HEK293 (cell line): ENCODE measurements at regions of chr1 and their contacts with region 1.

Region 1: DNA sequence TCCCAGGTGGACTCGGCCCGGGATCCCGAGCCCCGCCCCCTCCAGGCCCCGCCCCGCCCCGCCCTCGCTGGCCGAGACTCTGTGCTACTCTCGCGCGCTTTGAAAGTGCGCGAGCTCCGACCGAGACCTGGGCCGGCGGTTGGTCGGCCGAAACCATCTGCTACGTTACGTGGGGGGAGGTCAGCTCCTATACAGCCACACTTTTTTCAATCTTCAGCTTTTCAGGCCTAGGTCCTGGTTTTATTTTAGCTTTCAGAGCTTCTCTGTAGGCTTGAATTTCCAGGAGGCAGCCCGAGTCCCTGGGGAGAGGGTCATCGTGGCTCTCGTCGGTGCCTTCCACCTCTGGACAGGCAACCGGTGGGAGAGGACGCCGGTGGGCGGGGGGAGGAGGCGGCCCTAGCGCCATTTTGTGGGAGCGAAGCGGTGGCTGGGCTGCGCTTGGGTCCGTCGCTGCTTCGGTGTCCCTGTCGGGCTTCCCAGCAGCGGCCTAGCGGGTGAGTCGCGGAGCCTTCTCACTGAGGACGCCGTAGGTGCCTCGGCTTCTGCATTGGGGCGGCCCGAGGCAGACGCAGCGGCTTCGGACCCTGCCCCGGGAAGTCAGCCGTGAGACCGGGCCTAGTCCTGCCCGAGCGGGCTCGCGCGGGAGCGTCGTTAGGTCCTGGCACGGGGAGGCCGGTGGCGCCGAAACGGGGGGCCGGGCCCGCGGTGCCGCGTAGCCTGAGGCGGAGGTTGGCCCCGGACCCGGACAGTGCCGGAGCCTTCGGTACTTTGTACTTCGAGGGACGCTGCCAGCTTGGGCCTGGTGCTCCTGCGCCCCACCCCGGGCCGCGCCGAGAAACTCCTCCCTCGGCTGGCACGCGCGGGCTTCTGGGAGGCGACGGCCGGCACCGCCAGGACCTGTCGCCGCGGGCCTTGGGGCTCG is at the start of gene TARDBP:
- H3K4me3 ChIP-seq: peak within 1 kb of the TSS; percentile 100
- H3K27ac ChIP-seq: peak within 1 kb of the TSS; percentile 96
- H3K4me1 ChIP-seq: peaks cover 7% of the 10 kb centered on the region
- CTCF ChIP-seq: peak; percentile 38; the same call in 1 of the 2 replicates

Region 2: GRCh38 chr1:10814954-10815857 is 197.3 kb before region 1 on chr1:
- CTCF ChIA-PET with region 1: no interaction called
- POLR2A ChIA-PET with region 1: no interaction called
- H3K4me3 ChIP-seq: no peak overlapping the region
- H3K27ac ChIP-seq: no peak overlapping the region
- H3K4me1 ChIP-seq: no peaks in the 10 kb centered on the region
- CTCF ChIP-seq: no peak

Region 3: GRCh38 chr1:10975567-10976326 is 36.8 kb before region 1 on chr1:
- CTCF ChIA-PET with region 1: interaction called, 4 read pairs
- POLR2A ChIA-PET with region 1: interaction called, 10 read pairs
- H3K4me3 ChIP-seq: no peak overlapping the region
- H3K27ac ChIP-seq: no peak overlapping the region
- H3K4me1 ChIP-seq: no peaks in the 10 kb centered on the region
- CTCF ChIP-seq: no peak